ENCODE measurements at regions of chr3 and their contacts with region 1.

Region 1: GRCh38 chr3:103295974-103296570 is 861.3 kb downstream of the ZPLD1 start:
- DNase-seq: peak; percentile 19
- ATAC-seq: no peak
- H3K4me3 ChIP-seq: no peak overlapping the region
- H3K27ac ChIP-seq: no peak overlapping the region
- H3K4me1 ChIP-seq: no peaks in the 10 kb centered on the region
- H3K27me3 ChIP-seq: no peaks in the 10 kb centered on the region
- CTCF ChIP-seq: peak; percentile 19 to 58 (median 22); a peak in 4 of 6 replicates
- POLR2A ChIP-seq: no peak
- RAD21 ChIP-seq: peak; percentile 53

Region 2: DNA sequence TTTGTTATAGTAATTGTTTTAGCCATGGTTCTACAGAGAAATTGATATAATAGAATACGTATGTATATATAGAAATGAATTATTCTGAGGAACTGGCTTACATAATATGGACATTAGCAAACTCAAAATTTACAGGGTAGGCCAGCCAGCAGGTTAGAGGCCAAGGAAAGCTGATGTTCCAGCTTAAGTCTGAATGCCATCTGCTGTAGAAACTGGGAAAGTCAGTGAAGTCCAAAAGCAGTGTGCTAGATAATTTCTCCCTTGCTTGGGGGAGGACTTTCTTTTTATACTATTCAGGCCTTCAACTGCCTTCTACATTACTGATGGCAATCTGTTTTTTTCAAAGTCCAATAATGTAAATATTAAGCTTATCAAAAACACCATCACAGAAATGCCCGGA is 313.4 kb after region 1 on chr3:
- CTCF ChIA-PET with region 1: no interaction called
- POLR2A ChIA-PET with region 1: no interaction called
- RAD21 ChIA-PET with region 1: no interaction called
- intact Hi-C with region 1: loop called (anchors 10 kb)
- DNase-seq: no peak
- ATAC-seq: no peak
- H3K4me3 ChIP-seq: no peak overlapping the region
- H3K27ac ChIP-seq: no peak overlapping the region
- H3K4me1 ChIP-seq: no peaks in the 10 kb centered on the region
- H3K27me3 ChIP-seq: no peaks in the 10 kb centered on the region
- CTCF ChIP-seq: no peak
- POLR2A ChIP-seq: no peak
- RAD21 ChIP-seq: peak; percentile 32; the same call in 1 of the 2 replicates